GM12878 (cell line): ENCODE measurements at regions of chr17 and their contacts with region 1.

Region 1: DNA sequence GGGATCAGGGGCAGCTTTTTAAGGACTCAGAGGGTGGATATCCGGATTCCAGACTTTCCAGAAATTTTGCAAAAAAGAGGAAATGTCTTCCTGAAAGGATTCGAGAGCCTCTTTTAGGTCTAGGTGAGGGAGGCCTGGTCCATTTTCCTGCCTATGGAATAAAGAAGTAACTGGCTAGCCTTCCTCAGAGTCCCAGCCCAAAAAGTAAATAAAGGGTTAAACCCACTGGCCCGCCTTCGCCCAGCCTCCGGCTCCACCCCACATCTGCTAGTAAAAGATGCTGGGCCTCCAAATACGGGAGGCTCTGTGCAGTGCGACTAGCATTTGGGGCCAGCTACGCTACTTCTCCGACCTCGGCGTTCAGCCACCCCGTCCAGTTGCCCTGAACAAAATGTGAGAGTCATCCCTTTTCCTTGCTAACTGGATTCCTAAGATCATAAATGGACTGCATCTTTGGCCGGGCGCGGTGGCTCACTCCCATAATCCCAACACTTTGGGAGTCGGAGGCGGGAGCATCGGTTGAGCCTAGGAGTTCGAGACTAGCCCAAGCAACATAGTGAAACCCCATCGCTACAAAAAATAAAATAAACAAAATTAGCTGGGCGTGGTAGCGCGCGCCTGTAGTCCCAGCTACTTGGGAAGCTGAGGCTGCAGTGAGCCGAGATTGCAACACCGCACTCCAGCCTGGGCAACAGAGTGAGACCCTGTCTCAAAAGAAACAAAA is 824 bp upstream of the MPP2 start:
- DNase-seq: no peak
- ATAC-seq: peak; percentile 50
- H3K4me3 ChIP-seq: no peak overlapping the region
- H3K27ac ChIP-seq: no peak overlapping the region
- H3K4me1 ChIP-seq: no peaks in the 10 kb centered on the region
- H3K27me3 ChIP-seq: peaks cover 10 to 18% of the 10 kb centered on the region in 2 experiments
- CTCF ChIP-seq: no peak
- EP300 ChIP-seq: no peak
- POLR2A ChIP-seq: no peak
- RAD21 ChIP-seq: no peak

Region 2: GRCh38 chr17:43827590-43827989 is 80.6 kb before region 1 on chr17:
- CTCF ChIA-PET with region 1: no interaction called
- POLR2A ChIA-PET with region 1: no interaction called
- RAD21 ChIA-PET with region 1: no interaction called
- SMC1A ChIA-PET with region 1: no interaction called
- in situ Hi-C with region 1: no loop called
- intact Hi-C with region 1: no loop called
- DNase-seq: no peak
- ATAC-seq: no peak
- H3K4me3 ChIP-seq: no peak overlapping the region
- H3K27ac ChIP-seq: no peak overlapping the region
- H3K4me1 ChIP-seq: no peaks in the 10 kb centered on the region
- H3K27me3 ChIP-seq: peaks cover 0 to 7% of the 10 kb centered on the region in 2 experiments; a peak in 3 of 4 replicates
- CTCF ChIP-seq: no peak
- EP300 ChIP-seq: no peak
- POLR2A ChIP-seq: no peak
- RAD21 ChIP-seq: no peak

Region 3: DNA sequence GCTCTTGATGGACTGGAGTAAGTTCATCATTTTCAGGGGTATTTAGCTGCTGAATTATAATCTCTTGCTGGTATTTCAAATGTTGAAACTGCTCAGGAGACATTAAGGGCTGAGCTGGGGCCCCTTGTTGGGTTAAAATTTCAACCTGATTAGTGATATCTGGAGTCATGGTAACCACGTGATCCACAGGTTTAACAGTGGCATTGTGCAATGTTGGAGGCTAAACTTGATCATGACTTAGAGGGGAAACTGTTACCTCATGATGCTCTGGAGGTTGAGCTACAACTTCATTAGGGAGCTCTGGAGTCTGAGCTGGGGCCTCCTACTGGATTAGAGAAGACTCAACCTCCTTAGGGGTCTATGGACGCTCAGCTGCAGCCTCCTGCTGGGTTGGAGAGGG is 16.4 kb after region 1 on chr17:
- CTCF ChIA-PET with region 1: interaction called, 14 read pairs
- POLR2A ChIA-PET with region 1: interaction called, 3 read pairs
- RAD21 ChIA-PET with region 1: no interaction called
- SMC1A ChIA-PET with region 1: interaction called, 8 read pairs
- in situ Hi-C with region 1: no loop called
- intact Hi-C with region 1: no loop called
- DNase-seq: no peak
- ATAC-seq: no peak
- H3K4me3 ChIP-seq: no peak overlapping the region
- H3K27ac ChIP-seq: no peak overlapping the region
- H3K4me1 ChIP-seq: no peaks in the 10 kb centered on the region; the same call in 1 of the 2 replicates
- H3K27me3 ChIP-seq: peaks cover 0 to 5% of the 10 kb centered on the region in 2 experiments; a peak in 2 of 4 replicates
- CTCF ChIP-seq: no peak
- EP300 ChIP-seq: no peak
- POLR2A ChIP-seq: no peak
- RAD21 ChIP-seq: no peak